ENCODE measurements at regions of chr1 and their contacts with region 1.

Region 1: DNA sequence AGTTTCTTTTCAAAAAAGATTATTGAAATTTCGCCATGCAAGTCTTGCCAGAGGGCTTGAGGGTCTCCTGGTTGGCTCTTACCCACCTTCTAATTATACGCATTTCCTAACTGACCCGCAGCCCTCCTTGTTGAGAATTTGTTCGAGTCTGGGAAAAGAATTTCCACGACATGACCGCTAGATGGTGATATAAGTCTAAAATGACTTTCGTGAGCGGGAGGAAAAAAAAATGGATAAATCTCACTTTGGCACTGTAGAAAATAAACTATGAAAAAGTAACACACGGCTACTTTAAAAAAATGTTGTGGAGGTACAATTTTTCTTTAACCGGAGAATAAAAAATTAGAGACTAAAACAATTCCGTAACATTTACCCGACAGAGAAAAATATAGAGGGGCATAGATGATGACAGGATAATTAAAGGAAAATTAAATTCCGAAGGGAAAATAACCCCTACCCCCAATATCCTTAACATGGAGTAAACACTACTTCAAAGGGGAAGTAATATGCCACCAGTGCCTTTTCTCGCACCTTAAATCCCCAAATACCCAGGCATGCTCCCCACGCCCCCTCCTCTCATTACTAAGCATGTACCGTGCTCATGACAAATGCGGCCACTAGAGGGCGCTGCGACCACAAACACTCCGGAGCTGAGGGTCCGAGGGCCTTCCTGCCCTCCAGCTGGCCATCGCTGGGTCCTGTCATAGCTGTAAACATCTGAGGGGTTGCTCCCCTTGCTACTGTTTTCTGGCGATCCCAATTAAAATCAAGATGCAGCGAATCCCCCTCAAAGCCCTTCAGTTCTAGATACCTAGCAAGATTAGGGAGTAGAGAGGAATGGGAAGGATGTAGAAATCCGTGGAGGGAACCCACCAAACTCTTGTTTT is 266.9 kb downstream of the ASTN1 start:
- DNase-seq: peak; percentile 41 to 85 (median 67)
- H3K4me3 ChIP-seq: peak overlapping the region in 1 of 4 donors; percentile 44
- H3K27ac ChIP-seq: no peak overlapping the region
- H3K4me1 ChIP-seq: peaks cover 0 to 8% of the 10 kb centered on the region in 2 donors
- H3K27me3 ChIP-seq: no peaks in the 10 kb centered on the region
- CTCF ChIP-seq: peak; percentile 64 to 92 (median 80)
- POLR2A ChIP-seq: no peak

Region 2: GRCh38 chr1:176826263-176826662 is 71.3 kb before region 1 on chr1:
- intact Hi-C with region 1: no loop called
- DNase-seq: no peak
- H3K4me3 ChIP-seq: no peak overlapping the region
- H3K27ac ChIP-seq: no peak overlapping the region
- H3K4me1 ChIP-seq: no peaks in the 10 kb centered on the region
- H3K27me3 ChIP-seq: no peaks in the 10 kb centered on the region
- CTCF ChIP-seq: no peak
- POLR2A ChIP-seq: no peak

Region 3: GRCh38 chr1:176954242-176954641 is 56.6 kb after region 1 on chr1:
- intact Hi-C with region 1: loop called in 1 of 2 experiments (anchors 5 kb)
- DNase-seq: no peak
- H3K4me3 ChIP-seq: no peak overlapping the region
- H3K27ac ChIP-seq: no peak overlapping the region
- H3K4me1 ChIP-seq: no peaks in the 10 kb centered on the region
- H3K27me3 ChIP-seq: no peaks in the 10 kb centered on the region
- CTCF ChIP-seq: peak; percentile 24 to 40 (median 34)
- POLR2A ChIP-seq: no peak

Region 4: GRCh38 chr1:177007437-177008161 is 110.0 kb after region 1 on chr1:
- intact Hi-C with region 1: no loop called
- DNase-seq: no peak
- H3K4me3 ChIP-seq: no peak overlapping the region
- H3K27ac ChIP-seq: no peak overlapping the region
- H3K4me1 ChIP-seq: peaks cover 7 to 10% of the 10 kb centered on the region in 2 donors
- H3K27me3 ChIP-seq: no peaks in the 10 kb centered on the region
- CTCF ChIP-seq: no peak
- POLR2A ChIP-seq: no peak

Region 5: DNA sequence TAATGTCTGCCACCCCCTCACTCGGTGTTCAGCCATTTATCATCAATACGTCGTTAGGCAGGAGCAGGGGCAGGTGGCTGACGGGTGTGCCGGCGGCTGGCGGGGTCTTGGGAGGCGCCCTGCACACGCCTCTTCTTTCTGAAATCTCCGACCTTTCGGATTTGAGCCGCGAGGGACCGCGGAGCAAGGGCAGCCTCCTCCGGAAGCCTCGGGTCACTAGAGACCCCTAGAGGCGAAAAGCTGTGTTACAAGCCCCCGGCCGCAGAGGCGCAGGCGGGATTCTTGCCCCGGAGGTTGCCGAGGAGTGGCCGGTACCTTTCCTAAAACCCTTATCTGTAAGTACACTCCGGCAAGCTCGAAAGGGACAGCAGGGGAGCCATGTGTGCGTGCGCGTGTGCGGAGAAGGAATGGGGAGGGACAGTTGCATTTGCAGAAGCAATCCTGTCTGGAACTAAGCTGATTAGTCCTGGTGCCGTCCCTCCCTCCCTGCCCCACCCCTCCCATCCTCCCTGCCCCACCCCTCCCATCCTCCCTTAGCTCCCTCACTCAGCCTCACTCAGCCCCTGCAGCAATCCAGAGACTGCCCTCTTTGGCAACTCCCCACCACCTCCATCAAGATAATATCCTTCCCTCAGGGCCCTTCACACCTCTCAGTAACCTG is 284.2 kb after region 1 on chr1:
- intact Hi-C with region 1: loop called (anchors 5 kb)
- DNase-seq: peak; percentile 66 to 86 (median 77)
- H3K4me3 ChIP-seq: peak overlapping the region in 1 of 4 donors; percentile 43
- H3K27ac ChIP-seq: peak overlapping the region in 1 of 5 donors; percentile 26
- H3K4me1 ChIP-seq: no peaks in the 10 kb centered on the region
- H3K27me3 ChIP-seq: no peaks in the 10 kb centered on the region
- CTCF ChIP-seq: peak; percentile 79 to 88 (median 85)
- POLR2A ChIP-seq: no peak

Region 6: DNA sequence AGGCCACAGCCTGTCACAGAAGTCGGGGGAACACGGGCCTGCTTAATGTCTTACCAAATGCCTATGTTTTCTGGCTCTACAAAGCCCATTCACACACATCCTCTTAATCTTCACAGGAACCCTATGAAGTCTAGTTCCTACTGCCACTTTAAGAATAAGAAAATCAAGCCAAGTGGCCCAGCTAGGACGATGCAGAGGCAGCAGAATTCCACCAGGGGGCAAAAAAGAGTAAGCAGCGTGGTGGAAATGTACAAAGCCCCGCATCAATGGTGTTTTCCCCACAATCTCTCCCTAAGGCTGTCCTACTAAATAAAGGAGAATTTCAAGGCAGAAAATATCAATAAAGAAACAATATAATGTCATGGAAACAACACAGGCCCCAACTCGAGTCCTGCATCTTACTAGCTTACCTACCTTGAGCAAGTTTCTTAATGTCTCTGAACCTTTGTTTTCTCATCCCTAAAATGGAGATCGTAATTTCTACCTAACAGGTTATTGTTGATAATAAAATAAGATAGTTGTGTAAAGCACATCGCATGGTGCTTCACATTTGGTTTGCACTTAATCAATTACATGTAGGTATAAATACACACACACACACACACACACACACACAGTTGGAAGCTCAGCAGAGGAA is 1050.9 kb after region 1 on chr1:
- intact Hi-C with region 1: loop called in 1 of 2 experiments (anchors 10 kb)
- DNase-seq: peak; percentile 50 to 86 (median 70)
- H3K4me3 ChIP-seq: no peak overlapping the region
- H3K27ac ChIP-seq: no peak overlapping the region
- H3K4me1 ChIP-seq: no peaks in the 10 kb centered on the region
- H3K27me3 ChIP-seq: no peaks in the 10 kb centered on the region
- CTCF ChIP-seq: peak; percentile 87 to 92 (median 89)
- POLR2A ChIP-seq: no peak